T-cell (primary cell): ENCODE measurements at regions of chr11 and their contacts with region 1.

Region 1: GRCh38 chr11:128506999-128507611 is 80.3 kb downstream of the ETS1 start:
- DNase-seq: peak in 12 of 35 experiments; percentile 28 to 59 (median 48)
- ATAC-seq: peak; percentile 7 to 26 (median 18)
- H3K4me3 ChIP-seq: peak overlapping the region; percentile 48 to 67
- H3K4me3 Mint-ChIP-seq: peak overlapping the region; percentile 82 to 99 (median 98)
- H3K27ac ChIP-seq: peak overlapping the region; percentile 78
- H3K27ac Mint-ChIP-seq: peak overlapping the region; percentile 96 to 98
- H3K4me1 ChIP-seq: peaks cover 85 to 88% of the 10 kb centered on the region in 2 experiments
- H3K4me1 Mint-ChIP-seq: peaks cover 97 to 100% (median 99%) of the 10 kb centered on the region in 3 donors
- H3K27me3 ChIP-seq: no peaks in the 10 kb centered on the region
- H3K27me3 Mint-ChIP-seq: no peaks in the 10 kb centered on the region

Region 2: DNA sequence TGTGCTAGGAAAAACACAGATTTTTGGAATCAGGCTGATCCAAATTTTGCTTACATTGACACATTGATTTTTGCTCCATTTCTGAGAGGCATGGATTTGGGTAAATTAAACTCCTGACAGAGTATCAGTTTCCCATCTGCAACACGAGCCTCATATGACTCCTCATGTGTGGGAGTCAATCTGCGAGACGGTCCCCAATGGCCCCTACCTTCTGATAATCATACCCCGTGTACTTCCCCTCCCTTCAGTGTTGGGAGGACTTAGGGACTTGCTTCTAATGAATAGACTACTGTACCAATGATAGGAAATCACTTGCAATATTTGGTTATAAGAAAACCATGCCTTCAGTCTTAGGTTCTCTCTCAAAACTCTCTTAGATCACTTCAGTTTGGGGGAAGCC is 222.5 kb before region 1 on chr11:
- CTCF ChIA-PET with region 1: interaction called in 1 of 2 experiments, 23 read pairs
- POLR2A ChIA-PET with region 1: interaction called in 1 of 2 experiments, 13 read pairs
- DNase-seq: no peak
- ATAC-seq: no peak
- H3K4me3 ChIP-seq: no peak overlapping the region
- H3K4me3 Mint-ChIP-seq: peak overlapping the region in 1 of 3 donors; percentile 11
- H3K27ac ChIP-seq: peak overlapping the region; percentile 72
- H3K27ac Mint-ChIP-seq: peak overlapping the region; percentile 85
- H3K4me1 ChIP-seq: peaks cover 19 to 24% of the 10 kb centered on the region in 2 experiments
- H3K4me1 Mint-ChIP-seq: peaks cover 47 to 54% (median 52%) of the 10 kb centered on the region in 3 donors
- H3K27me3 ChIP-seq: no peaks in the 10 kb centered on the region
- H3K27me3 Mint-ChIP-seq: no peaks in the 10 kb centered on the region

Region 3: GRCh38 chr11:128428935-128429334 is 78.2 kb before region 1 on chr11:
- CTCF ChIA-PET with region 1: no interaction called
- POLR2A ChIA-PET with region 1: no interaction called
- DNase-seq: no peak
- ATAC-seq: no peak
- H3K4me3 ChIP-seq: no peak overlapping the region
- H3K4me3 Mint-ChIP-seq: no peak overlapping the region
- H3K27ac ChIP-seq: no peak overlapping the region
- H3K27ac Mint-ChIP-seq: no peak overlapping the region
- H3K4me1 ChIP-seq: peaks cover 6 to 15% of the 10 kb centered on the region in 2 experiments
- H3K4me1 Mint-ChIP-seq: peaks cover 8 to 30% (median 9%) of the 10 kb centered on the region in 3 donors
- H3K27me3 ChIP-seq: peaks cover 0 to 3% of the 10 kb centered on the region in 2 experiments
- H3K27me3 Mint-ChIP-seq: no peaks in the 10 kb centered on the region

Region 4: DNA sequence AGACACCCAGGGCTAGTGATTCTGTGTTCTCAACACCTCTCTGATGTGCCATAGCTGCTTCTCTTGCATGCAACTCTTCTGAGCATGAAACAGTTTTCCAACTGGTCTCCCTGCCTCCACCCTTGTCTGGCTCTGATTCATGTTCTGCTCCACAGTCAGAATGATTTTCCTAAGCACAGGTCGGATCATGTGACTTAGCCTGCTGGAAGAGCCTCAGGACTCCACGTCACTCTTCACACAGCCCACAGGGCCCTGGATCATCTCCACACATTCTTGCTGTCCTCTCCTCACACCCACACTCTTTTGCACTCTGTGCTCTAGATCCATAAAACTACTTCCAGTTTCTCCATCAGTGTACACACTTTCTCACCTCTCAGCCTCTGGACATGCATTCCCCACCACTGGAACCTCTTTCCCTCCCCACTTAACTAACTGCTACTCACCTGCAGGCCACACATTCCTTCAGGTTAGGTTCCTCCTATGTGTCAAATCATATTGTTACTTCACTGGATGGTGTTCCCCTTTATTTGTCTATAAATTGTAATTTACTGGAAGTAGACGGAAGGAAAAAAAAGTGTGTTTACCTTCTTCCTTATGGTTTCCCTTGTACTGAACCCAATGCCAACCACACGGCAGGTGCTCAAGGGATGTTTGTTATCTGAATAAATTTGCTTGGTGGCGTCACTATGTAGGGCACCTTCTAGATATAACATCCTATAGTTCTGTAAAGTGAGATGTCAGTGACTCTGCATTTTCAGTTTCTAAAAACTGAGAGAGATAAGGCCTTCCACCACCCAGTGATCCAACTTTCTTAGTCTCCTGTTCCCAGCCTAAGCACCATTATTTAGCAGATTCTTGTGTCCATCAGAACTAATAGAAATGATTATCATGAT is 53.4 kb before region 1 on chr11:
- CTCF ChIA-PET with region 1: interaction called in 1 of 2 experiments, 3 read pairs
- POLR2A ChIA-PET with region 1: interaction called in 1 of 2 experiments, 15 read pairs
- DNase-seq: peak in 2 of 35 experiments; percentile 1 to 28
- ATAC-seq: peak; percentile 5 to 62 (median 16)
- H3K4me3 ChIP-seq: no peak overlapping the region
- H3K4me3 Mint-ChIP-seq: peak overlapping the region in 1 of 3 donors; percentile 0
- H3K27ac ChIP-seq: peak overlapping the region; percentile 43
- H3K27ac Mint-ChIP-seq: peak overlapping the region; percentile 74 to 90
- H3K4me1 ChIP-seq: peaks cover 27 to 31% of the 10 kb centered on the region in 2 experiments
- H3K4me1 Mint-ChIP-seq: peaks cover 55 to 74% (median 66%) of the 10 kb centered on the region in 3 donors
- H3K27me3 ChIP-seq: no peaks in the 10 kb centered on the region
- H3K27me3 Mint-ChIP-seq: no peaks in the 10 kb centered on the region

Region 5: DNA sequence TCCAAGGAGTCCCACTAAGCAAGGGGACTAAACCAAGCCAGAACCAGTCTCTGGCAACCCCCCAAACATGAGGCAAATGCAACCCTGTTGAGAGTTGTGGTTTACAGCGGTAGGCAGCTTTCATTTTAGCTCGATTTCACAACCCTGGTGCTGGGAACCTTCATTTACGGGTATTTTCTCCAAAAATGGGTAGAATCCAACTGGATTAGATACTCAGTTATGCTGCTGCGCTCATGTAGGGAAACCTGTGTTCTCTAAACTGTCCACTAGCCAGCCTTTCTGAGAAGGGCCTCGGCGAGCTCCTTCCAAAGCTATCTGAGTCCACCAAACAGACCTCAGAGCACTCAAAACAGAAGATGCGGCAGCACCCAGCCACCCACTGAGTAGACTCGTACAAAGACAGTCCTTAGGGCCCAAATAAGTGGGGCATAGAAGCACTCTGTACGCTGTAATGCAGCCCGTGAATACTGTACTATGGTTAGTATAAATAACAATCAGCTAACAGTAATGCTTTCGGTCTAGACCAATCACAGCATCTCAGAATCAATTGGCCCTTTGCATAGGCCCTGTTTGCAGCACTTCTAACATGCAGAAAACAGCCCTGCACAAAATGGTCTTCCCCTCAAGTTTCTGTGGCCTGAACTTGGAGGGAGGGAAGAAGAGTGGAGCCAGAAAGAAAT is 24.5 kb before region 1 on chr11:
- CTCF ChIA-PET with region 1: interaction called, 3 to 10 read pairs
- POLR2A ChIA-PET with region 1: interaction called, 6 to 13 read pairs
- DNase-seq: peak in 30 of 35 experiments; percentile 38 to 85 (median 69)
- ATAC-seq: peak; percentile 66 to 75 (median 72)
- H3K4me3 ChIP-seq: peak overlapping the region in 1 of 2 donors; percentile 17
- H3K4me3 Mint-ChIP-seq: peak overlapping the region; percentile 63 to 99 (median 77)
- H3K27ac ChIP-seq: peak overlapping the region; percentile 96
- H3K27ac Mint-ChIP-seq: peak overlapping the region; percentile 98
- H3K4me1 ChIP-seq: peaks cover 76 to 84% of the 10 kb centered on the region in 2 experiments
- H3K4me1 Mint-ChIP-seq: peaks cover 96 to 100% (median 97%) of the 10 kb centered on the region in 3 donors
- H3K27me3 ChIP-seq: no peaks in the 10 kb centered on the region
- H3K27me3 Mint-ChIP-seq: no peaks in the 10 kb centered on the region

Region 6: GRCh38 chr11:128704517-128704916 is 197.4 kb after region 1 on chr11:
- CTCF ChIA-PET with region 1: no interaction called
- POLR2A ChIA-PET with region 1: interaction called in 1 of 2 experiments, 12 read pairs
- DNase-seq: no peak
- ATAC-seq: peak in 3 of 4 experiments; percentile 47 to 66 (median 61)
- H3K4me3 ChIP-seq: no peak overlapping the region
- H3K4me3 Mint-ChIP-seq: peak overlapping the region in 1 of 3 donors; percentile 48
- H3K27ac ChIP-seq: no peak overlapping the region
- H3K27ac Mint-ChIP-seq: peak overlapping the region; percentile 81 to 83
- H3K4me1 ChIP-seq: peaks cover 48 to 61% of the 10 kb centered on the region in 2 experiments
- H3K4me1 Mint-ChIP-seq: peaks cover 93 to 100% (median 99%) of the 10 kb centered on the region in 3 donors
- H3K27me3 ChIP-seq: no peaks in the 10 kb centered on the region
- H3K27me3 Mint-ChIP-seq: no peaks in the 10 kb centered on the region